Gastrocnemius medialis (tissue), 4 donors: ENCODE measurements at regions of chr2 and their contacts with region 1.

Region 1: GRCh38 chr2:240434728-240435456 is 571 bp upstream of the GPC1 start:
- DNase-seq: peak; percentile 91
- ATAC-seq: peak; percentile 52 to 64
- H3K4me3 ChIP-seq: peak overlapping the region; percentile 46 to 77 (median 59)
- H3K27ac ChIP-seq: peak overlapping the region; percentile 84 to 97 (median 93)
- H3K4me1 ChIP-seq: peaks cover 35 to 39% of the 10 kb centered on the region in 2 donors
- H3K27me3 ChIP-seq: no peaks in the 10 kb centered on the region
- CTCF ChIP-seq: no peak
- POLR2A ChIP-seq: no peak

Region 2: GRCh38 chr2:240136013-240136670 is 298.8 kb before region 1 on chr2 and contains the start of gene COPS9:
- in situ Hi-C with region 1: no loop called
- intact Hi-C with region 1: loop called (anchors 10 kb)
- DNase-seq: peak; percentile 73 to 81
- ATAC-seq: peak; percentile 84 to 93
- H3K4me3 ChIP-seq: peak within 1 kb of the TSS; percentile 75 to 97 (median 90)
- H3K27ac ChIP-seq: peak within 1 kb of the TSS; percentile 71 to 89 (median 82)
- H3K4me1 ChIP-seq: peaks cover 23 to 26% of the 10 kb centered on the region in 2 donors
- H3K27me3 ChIP-seq: no peaks in the 10 kb centered on the region
- CTCF ChIP-seq: peak in 1 of 5 experiments; percentile 6
- POLR2A ChIP-seq: peak; percentile 52 to 72
- total RNA-seq, gene COPS9: 163 to 219 (median 193) TPM

Region 3: GRCh38 chr2:240225660-240226475 is 209.0 kb before region 1 on chr2:
- in situ Hi-C with region 1: loop called in 3 of 4 experiments (anchors 5 to 25 kb)
- intact Hi-C with region 1: no loop called
- DNase-seq: no peak
- ATAC-seq: no peak
- H3K4me3 ChIP-seq: no peak overlapping the region
- H3K27ac ChIP-seq: no peak overlapping the region
- H3K4me1 ChIP-seq: peaks cover 4 to 7% of the 10 kb centered on the region in 2 donors
- H3K27me3 ChIP-seq: no peaks in the 10 kb centered on the region
- CTCF ChIP-seq: peak in 1 of 5 experiments; percentile 12
- POLR2A ChIP-seq: no peak

Region 4: GRCh38 chr2:240348522-240348921 is 86.4 kb before region 1 on chr2:
- in situ Hi-C with region 1: no loop called
- intact Hi-C with region 1: loop called (anchors 2 kb)
- DNase-seq: peak; percentile 88 to 89
- ATAC-seq: peak; percentile 95 to 98
- H3K4me3 ChIP-seq: no peak overlapping the region
- H3K27ac ChIP-seq: peak overlapping the region; percentile 67 to 79 (median 73)
- H3K4me1 ChIP-seq: peaks cover 8 to 11% of the 10 kb centered on the region in 2 donors
- H3K27me3 ChIP-seq: no peaks in the 10 kb centered on the region
- CTCF ChIP-seq: no peak
- POLR2A ChIP-seq: no peak

Region 5: GRCh38 chr2:240387669-240388358 is 47.1 kb before region 1 on chr2:
- in situ Hi-C with region 1: no loop called
- intact Hi-C with region 1: loop called (anchors 5 kb)
- DNase-seq: peak; percentile 66 to 86
- ATAC-seq: peak; percentile 80 to 85
- H3K4me3 ChIP-seq: no peak overlapping the region
- H3K27ac ChIP-seq: peak overlapping the region; percentile 52 to 66 (median 58)
- H3K4me1 ChIP-seq: peaks cover 26 to 31% of the 10 kb centered on the region in 2 donors
- H3K27me3 ChIP-seq: no peaks in the 10 kb centered on the region
- CTCF ChIP-seq: no peak
- POLR2A ChIP-seq: no peak